ENCODE measurements at regions of chr9 and their contacts with region 1.

Region 1: DNA sequence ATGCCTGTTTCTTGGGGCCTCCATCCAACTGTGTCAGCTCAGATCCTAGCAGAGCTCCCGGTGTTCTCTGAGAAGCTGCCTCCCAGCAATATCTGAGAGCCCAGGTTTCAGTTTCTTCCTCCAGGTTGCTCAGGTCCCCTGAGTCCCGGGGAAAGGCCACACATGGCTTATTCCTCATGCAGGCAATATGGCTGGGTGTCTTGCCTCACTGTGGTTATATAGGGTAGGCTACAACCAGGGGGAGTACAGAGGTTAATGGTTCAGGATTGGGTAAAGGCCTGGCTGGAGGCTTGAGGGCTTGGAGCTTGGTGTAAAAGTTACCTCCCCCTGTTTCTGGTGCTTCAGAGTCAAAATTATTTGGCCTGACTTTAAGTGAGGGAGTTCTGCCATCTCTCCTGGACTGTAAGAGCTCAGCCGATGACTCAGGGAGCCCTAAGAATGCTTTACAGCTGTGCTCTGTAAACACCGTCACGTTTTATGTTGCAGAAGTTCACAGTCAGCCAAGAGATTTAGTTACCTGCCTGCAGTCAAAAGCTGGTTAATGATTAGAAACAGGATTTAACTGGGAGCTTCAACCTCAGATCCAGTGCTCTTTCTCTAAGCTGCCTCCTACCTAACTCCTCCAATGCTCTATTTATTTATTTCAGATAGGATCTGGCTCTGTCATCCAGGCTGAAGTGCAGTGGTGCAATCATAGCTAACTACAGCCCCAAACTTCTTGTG is 24.3 kb upstream of the UBAP2 start:
- DNase-seq: peak; percentile 94
- ATAC-seq: peak; percentile 89
- H3K4me3 ChIP-seq: peak overlapping the region; percentile 17 to 57 (median 18); a peak in 5 of 6 replicates
- H3K27ac ChIP-seq: peak overlapping the region; percentile 69
- H3K4me1 ChIP-seq: peaks cover 49% of the 10 kb centered on the region
- H3K27me3 ChIP-seq: no peaks in the 10 kb centered on the region
- CTCF ChIP-seq: peak; percentile 7; the same call in 1 of the 2 replicates
- EP300 ChIP-seq: no peak
- POLR2A ChIP-seq: peak in 1 of 2 experiments; percentile 37; a peak in 2 of 4 replicates
- RAD21 ChIP-seq: no peak

Region 2: DNA sequence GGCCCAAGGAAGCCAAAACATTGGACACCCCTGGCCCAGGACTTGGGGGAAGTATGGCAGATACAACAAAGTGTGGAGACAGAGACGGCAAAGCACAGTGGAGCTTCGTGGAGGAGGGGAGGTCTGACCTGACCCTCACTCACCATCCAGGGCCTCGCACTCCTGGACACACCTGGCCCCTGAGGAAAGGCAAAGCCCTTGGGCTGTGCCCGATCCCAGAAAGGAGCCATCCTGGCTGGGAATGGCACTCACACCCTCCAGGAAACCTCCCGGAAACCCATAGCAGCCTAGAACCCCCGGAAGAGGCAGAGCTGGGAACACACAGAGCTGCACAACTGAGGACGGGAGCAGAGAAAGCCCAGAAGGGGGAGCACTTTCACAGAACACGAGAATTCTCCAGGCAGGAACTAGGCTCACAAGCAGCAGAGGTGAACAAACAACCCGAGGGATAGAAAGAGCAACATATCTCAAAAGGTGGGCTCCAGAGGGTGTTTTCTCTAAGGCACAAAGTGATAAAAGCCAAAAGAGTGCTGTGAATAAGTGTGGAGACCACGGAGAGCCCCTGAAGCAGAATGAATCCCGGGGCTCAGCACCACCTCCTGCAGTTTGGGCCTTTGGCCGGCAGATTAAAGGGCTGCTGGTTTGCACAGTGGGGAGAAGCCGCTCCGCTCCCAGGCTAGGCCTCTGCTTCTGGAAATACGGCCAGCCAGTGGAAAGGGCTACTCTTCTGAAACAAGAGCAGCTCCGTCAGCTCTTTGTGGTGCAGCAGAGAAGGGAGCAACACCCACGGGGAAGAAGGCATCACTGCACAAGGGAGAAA is 147.8 kb before region 1 on chr9:
- CTCF ChIA-PET with region 1: interaction called, 6 read pairs
- POLR2A ChIA-PET with region 1: interaction called, 3 read pairs
- in situ Hi-C with region 1: no loop called
- intact Hi-C with region 1: loop called (anchors 1 kb)
- DNase-seq: peak; percentile 61
- ATAC-seq: peak; percentile 64
- H3K4me3 ChIP-seq: no peak overlapping the region
- H3K27ac ChIP-seq: peak overlapping the region; percentile 40
- H3K4me1 ChIP-seq: peaks cover 14% of the 10 kb centered on the region
- H3K27me3 ChIP-seq: no peaks in the 10 kb centered on the region
- CTCF ChIP-seq: peak; percentile 67
- EP300 ChIP-seq: no peak
- POLR2A ChIP-seq: no peak
- RAD21 ChIP-seq: peak; percentile 49; the same call in 1 of the 2 replicates

Region 3: DNA sequence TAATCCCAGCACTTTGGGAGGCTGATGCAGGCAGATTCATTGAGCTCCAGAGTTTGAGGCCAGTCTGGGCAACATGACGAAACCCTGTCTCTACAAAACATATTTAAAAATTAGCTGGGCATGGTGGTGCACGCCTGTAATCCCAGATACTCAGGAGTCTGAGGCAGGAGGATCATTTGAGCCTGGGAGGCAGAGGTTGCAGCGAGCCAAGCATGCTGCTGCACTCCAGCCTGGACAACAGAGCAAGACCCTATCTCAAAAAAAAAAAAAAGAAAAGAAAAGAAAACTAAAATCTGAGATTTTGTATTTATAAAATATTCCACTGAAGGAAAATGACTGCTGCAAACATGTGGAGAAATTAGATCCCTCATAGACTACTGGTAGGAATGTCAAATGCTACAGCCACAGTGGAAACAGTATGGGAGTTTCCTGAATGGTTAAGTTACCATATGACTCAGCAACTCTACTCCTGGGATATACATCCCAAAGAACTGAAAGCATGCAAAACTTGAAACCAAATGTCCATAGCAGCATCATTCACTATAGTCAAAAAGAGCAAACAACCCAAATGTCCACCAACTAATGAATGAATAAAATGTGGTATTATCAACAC is 130.5 kb before region 1 on chr9:
- CTCF ChIA-PET with region 1: no interaction called
- POLR2A ChIA-PET with region 1: interaction called, 8 read pairs
- in situ Hi-C with region 1: no loop called
- intact Hi-C with region 1: loop called (anchors 5 kb)
- DNase-seq: peak; percentile 64
- ATAC-seq: peak; percentile 34; the same call in 1 of the 3 replicates
- H3K4me3 ChIP-seq: no peak overlapping the region
- H3K27ac ChIP-seq: peak overlapping the region; percentile 99
- H3K4me1 ChIP-seq: peaks cover 63% of the 10 kb centered on the region
- H3K27me3 ChIP-seq: no peaks in the 10 kb centered on the region
- CTCF ChIP-seq: no peak
- EP300 ChIP-seq: no peak
- POLR2A ChIP-seq: no peak
- RAD21 ChIP-seq: no peak

Region 4: GRCh38 chr9:34010979-34011378 is 62.0 kb before region 1 on chr9:
- CTCF ChIA-PET with region 1: interaction called, 11 read pairs
- POLR2A ChIA-PET with region 1: no interaction called
- in situ Hi-C with region 1: no loop called
- intact Hi-C with region 1: loop called (anchors 1 kb)
- DNase-seq: peak; percentile 3
- ATAC-seq: no peak
- H3K4me3 ChIP-seq: no peak overlapping the region
- H3K27ac ChIP-seq: no peak overlapping the region
- H3K4me1 ChIP-seq: no peaks in the 10 kb centered on the region
- H3K27me3 ChIP-seq: no peaks in the 10 kb centered on the region
- CTCF ChIP-seq: no peak
- EP300 ChIP-seq: no peak
- POLR2A ChIP-seq: no peak
- RAD21 ChIP-seq: no peak

Region 5: GRCh38 chr9:34151398-34151797 is 78.4 kb after region 1 on chr9:
- CTCF ChIA-PET with region 1: no interaction called
- POLR2A ChIA-PET with region 1: no interaction called
- in situ Hi-C with region 1: no loop called
- intact Hi-C with region 1: no loop called
- DNase-seq: no peak
- ATAC-seq: no peak
- H3K4me3 ChIP-seq: no peak overlapping the region
- H3K27ac ChIP-seq: no peak overlapping the region
- H3K4me1 ChIP-seq: no peaks in the 10 kb centered on the region; the same call in 1 of the 2 replicates
- H3K27me3 ChIP-seq: no peaks in the 10 kb centered on the region; a peak in 1 of 5 replicates
- CTCF ChIP-seq: no peak
- EP300 ChIP-seq: no peak
- POLR2A ChIP-seq: no peak
- RAD21 ChIP-seq: no peak

Region 6: DNA sequence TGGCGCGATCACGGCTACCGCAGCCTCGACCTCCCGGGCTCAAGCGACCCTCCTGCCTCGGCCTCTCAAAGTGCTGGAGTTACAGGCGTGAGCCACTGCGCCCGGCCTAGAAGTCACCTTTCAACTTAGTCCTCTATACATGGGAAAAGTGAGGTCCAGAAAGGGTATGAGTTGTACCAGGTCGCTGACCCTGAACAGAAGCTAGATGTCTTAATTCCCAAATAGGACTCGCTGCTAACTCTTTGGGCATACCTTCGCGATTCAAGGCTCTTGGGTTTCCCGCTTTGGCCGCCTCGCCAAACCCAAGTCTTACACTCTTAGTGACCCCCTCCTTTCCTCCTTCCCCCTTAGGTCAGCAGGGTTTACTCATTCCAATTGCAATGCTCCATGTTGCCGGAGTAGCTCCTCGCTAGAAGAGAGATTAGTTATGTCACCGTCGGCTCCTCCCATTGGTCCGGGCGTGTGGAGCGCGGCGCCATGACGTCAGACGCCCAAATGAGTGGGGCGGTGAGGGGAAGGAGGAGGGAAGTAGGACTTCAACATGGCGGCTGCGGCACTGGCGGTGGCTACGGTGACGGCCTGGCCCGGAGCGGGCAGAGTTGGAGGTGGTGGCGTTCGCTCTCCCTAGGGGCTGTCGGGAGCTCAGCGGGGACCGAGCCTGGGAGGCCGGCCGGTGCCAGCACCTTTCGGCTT is 105.6 kb after region 1 on chr9 and contains the start of gene UBAP1:
- CTCF ChIA-PET with region 1: no interaction called
- POLR2A ChIA-PET with region 1: interaction called, 20 read pairs
- in situ Hi-C with region 1: no loop called
- intact Hi-C with region 1: no loop called
- DNase-seq: peak; percentile 96
- ATAC-seq: peak; percentile 96
- H3K4me3 ChIP-seq: peak within 1 kb of the TSS; percentile 80 to 97 (median 84)
- H3K27ac ChIP-seq: peak within 1 kb of the TSS; percentile 82
- H3K4me1 ChIP-seq: peaks cover 8% of the 10 kb centered on the region
- H3K27me3 ChIP-seq: peaks cover 0 to 3% of the 10 kb centered on the region in 2 experiments; a peak in 1 of 5 replicates
- CTCF ChIP-seq: no peak
- EP300 ChIP-seq: no peak
- POLR2A ChIP-seq: peak; percentile 61 to 90
- RAD21 ChIP-seq: no peak
- total RNA-seq, gene UBAP1: 19.5 and 25.0 TPM in 2 replicates

Region 7: GRCh38 chr9:35258676-35259474 is 1185.8 kb after region 1 on chr9:
- CTCF ChIA-PET with region 1: no interaction called
- POLR2A ChIA-PET with region 1: no interaction called
- in situ Hi-C with region 1: no loop called
- intact Hi-C with region 1: no loop called
- DNase-seq: peak; percentile 71
- ATAC-seq: peak; percentile 86
- H3K4me3 ChIP-seq: peak overlapping the region; percentile 44 to 63 (median 48)
- H3K27ac ChIP-seq: peak overlapping the region; percentile 81
- H3K4me1 ChIP-seq: peaks cover 23% of the 10 kb centered on the region
- H3K27me3 ChIP-seq: no peaks in the 10 kb centered on the region
- CTCF ChIP-seq: peak; percentile 77
- EP300 ChIP-seq: no peak
- POLR2A ChIP-seq: no peak
- RAD21 ChIP-seq: peak; percentile 60; the same call in 1 of the 2 replicates

Region 8: DNA sequence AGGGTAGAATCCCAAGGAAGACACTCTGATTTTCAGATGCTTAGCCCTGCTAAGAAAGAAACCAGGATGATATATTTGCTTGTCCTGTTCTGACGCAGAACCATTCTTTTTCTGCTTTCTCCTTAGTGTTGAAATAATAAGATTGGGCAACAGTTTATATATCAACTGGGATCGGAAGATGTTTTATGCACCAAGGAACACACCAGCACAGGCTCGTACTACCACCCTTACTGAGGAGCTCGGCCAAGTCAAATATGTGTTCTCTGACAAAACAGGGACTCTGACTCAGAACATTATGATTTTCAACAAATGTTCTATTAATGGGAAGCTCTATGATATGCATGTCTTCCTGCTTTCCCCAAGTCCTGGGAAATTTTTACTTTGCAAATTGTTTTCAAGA is 1397.9 kb after region 1 on chr9:
- CTCF ChIA-PET with region 1: no interaction called
- POLR2A ChIA-PET with region 1: no interaction called
- in situ Hi-C with region 1: no loop called
- intact Hi-C with region 1: no loop called
- DNase-seq: no peak
- ATAC-seq: no peak
- H3K4me3 ChIP-seq: no peak overlapping the region
- H3K27ac ChIP-seq: no peak overlapping the region
- H3K4me1 ChIP-seq: peaks cover 8% of the 10 kb centered on the region; the same call in 1 of the 2 replicates
- H3K27me3 ChIP-seq: peaks cover 0 to 1% of the 10 kb centered on the region in 2 experiments; a peak in 1 of 5 replicates
- CTCF ChIP-seq: no peak
- EP300 ChIP-seq: no peak
- POLR2A ChIP-seq: no peak
- RAD21 ChIP-seq: no peak

Measured in HepG2 (cell line).